PC-9 (cell line): ENCODE measurements at regions of chr1 and their contacts with region 1.

Region 1: DNA sequence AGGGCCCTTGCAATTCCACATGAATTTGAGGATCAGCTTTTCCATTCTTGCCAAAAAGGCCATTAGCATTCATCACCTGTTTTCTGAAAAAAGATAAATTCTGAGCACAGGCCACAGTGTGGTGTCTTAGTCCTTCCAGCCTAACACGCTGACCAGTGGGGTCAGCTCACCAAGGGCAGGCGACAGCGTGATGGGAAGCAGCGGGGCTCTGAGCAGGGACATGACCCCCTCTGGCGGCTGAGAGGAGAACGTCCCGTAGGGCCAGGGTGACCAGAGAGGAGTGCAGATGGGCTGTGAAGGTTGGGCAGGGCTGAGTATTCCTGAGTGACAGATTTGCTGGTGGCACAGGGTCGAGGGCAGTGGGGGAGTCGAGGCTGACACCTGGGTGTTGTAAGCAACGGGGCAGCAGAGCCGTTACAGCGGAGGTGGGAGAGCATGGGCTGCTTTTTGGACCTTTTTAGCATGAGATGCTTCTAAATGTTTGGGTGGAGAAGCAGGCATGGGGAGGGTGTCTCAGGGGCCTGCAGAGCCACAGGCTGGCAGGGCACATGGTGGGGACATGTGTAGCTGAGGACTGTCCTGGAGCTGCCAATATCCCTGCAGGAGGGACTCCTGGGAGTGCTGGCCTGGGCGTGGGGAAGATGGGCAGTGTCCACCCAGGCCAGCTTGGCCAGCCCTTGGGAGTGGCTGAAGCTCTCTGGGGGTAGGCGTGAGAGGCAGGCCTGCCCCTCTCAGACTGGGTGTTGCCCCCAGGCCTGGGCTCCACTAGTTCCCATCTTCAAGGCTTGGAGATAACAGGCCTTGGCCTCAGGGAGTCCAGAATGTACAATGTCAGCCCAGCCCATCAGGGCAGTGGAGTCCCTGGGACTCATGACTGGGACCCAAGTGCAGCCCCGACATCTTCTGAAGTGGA is 8.6 kb upstream of the CALML6 start:
- DNase-seq: peak; percentile 62 to 83
- H3K4me3 ChIP-seq: no peak overlapping the region
- H3K27ac ChIP-seq: no peak overlapping the region
- H3K4me1 ChIP-seq: peaks cover 12% of the 10 kb centered on the region; the same call in 1 of the 2 replicates
- H3K27me3 ChIP-seq: no peaks in the 10 kb centered on the region
- CTCF ChIP-seq: peak; percentile 90

Region 2: DNA sequence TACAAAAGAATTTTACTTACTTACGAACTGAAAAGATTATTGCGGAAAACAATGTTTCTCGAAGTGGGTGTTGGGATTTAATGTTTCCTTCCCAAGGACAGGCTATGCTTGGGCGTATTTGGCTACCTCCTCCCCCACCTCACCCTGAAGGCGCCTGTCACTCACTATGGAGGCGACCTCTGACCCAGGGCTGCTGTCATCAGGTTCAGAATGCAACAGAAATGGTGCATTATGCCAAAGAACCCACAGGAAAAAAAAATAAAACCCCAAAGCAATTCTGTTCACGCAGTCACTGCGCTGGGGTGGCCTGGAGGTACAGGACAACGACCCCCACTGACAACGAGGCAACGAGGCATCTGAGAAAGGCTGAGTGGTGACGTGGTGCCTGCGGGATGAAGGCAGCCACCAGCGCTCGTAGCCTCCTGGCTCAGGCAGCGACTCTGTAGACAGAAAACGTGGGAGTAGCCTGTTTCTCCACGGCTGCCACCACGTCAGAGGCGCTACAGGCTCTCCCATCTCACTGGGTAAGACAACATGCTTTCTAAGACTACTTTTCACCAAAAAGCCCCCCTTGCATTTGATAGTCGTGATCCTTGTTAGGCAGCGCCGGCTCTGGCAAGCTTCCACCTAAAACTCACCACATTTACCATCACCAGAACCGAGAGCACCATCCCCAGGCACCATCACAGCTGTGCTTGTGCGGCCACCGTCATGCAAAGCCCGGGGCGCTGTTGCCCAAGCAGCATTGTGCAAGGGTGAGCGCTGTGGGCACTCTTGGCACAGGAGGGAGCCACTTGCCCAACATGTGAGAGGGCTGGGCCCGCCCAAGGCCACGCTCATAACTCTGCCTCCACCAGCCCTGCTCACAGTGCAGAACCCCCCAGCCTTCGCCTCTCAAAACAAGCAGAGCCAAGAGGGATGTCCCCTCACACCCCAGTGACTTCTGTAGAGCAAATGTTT is 142.5 kb before region 1 on chr1:
- CTCF ChIA-PET with region 1: interaction called, 4 read pairs
- POLR2A ChIA-PET with region 1: no interaction called
- intact Hi-C with region 1: loop called (anchors 5 kb)
- DNase-seq: peak; percentile 78 to 93
- H3K4me3 ChIP-seq: no peak overlapping the region; the same call in 1 of the 2 replicates
- H3K27ac ChIP-seq: peak overlapping the region; percentile 83
- H3K4me1 ChIP-seq: peaks cover 65% of the 10 kb centered on the region
- H3K27me3 ChIP-seq: no peaks in the 10 kb centered on the region
- CTCF ChIP-seq: no peak; the same call in 1 of the 2 replicates

Region 3: GRCh38 chr1:1943834-1944570 is 37.6 kb after region 1 on chr1:
- CTCF ChIA-PET with region 1: interaction called, 11 read pairs
- POLR2A ChIA-PET with region 1: no interaction called
- intact Hi-C with region 1: no loop called
- DNase-seq: peak in 1 of 2 experiments; percentile 52
- H3K4me3 ChIP-seq: peak overlapping the region; percentile 27; the same call in 1 of the 2 replicates
- H3K27ac ChIP-seq: no peak overlapping the region
- H3K4me1 ChIP-seq: no peaks in the 10 kb centered on the region
- H3K27me3 ChIP-seq: peaks cover 67% of the 10 kb centered on the region
- CTCF ChIP-seq: peak; percentile 95

Region 4: DNA sequence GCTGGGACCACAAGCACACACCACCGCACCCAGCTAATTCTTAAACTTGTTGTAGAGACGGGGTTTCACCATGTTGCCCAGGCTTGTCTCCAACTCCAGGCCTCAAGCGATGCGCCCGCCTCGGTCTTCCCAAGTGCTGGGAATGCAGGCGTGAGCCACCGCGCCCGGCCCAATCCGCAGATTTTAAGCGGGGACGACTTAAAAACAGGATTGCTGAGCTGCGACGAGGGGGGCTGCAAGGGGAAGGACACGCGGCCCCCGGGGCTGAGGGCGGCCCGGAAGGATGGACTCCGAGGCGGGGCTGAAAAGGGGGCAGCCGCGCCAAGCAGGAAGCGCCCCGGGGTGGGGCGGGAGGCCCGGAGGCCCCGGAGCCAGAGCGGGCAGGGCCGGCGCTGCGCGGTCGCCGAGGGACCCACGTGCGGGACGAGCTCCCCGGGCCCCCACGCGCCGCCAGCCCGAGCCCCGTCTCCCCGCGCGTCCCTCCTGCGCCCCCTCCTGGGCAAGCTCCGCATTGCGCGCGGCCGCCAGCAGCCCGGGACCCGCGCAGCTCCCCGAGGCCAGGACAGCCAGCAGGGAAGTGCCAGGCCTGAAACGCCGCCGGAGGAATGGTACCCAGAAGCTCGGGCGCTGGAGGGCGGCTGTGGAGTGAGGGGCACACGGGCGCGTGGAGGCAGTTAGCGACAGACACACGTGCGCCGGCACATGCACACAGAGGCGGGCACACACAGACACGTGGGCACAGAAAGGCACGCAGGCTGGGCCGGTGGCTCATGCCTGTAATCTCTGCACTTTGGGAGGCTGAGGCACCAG is 138.3 kb after region 1 on chr1:
- CTCF ChIA-PET with region 1: interaction called, 8 read pairs
- POLR2A ChIA-PET with region 1: no interaction called
- intact Hi-C with region 1: loop called (anchors 1 kb)
- DNase-seq: peak in 1 of 2 experiments; percentile 72
- H3K4me3 ChIP-seq: no peak overlapping the region
- H3K27ac ChIP-seq: no peak overlapping the region
- H3K4me1 ChIP-seq: no peaks in the 10 kb centered on the region
- H3K27me3 ChIP-seq: peaks cover 22% of the 10 kb centered on the region
- CTCF ChIP-seq: peak; percentile 66

Region 5: GRCh38 chr1:2586154-2587070 is 680.0 kb after region 1 on chr1 and contains the start of gene PRXL2B:
- CTCF ChIA-PET with region 1: no interaction called
- POLR2A ChIA-PET with region 1: no interaction called
- intact Hi-C with region 1: no loop called
- DNase-seq: peak; percentile 91 to 98
- H3K4me3 ChIP-seq: peak within 1 kb of the TSS; percentile 75
- H3K27ac ChIP-seq: peak within 1 kb of the TSS; percentile 2; the same call in 1 of the 2 replicates
- H3K4me1 ChIP-seq: no peaks in the 10 kb centered on the region
- H3K27me3 ChIP-seq: no peaks in the 10 kb centered on the region
- CTCF ChIP-seq: no peak
- total RNA-seq, gene PRXL2B: 26.1 and 35.3 TPM in 2 replicates